ENCODE measurements at regions of chr18 and their contacts with region 1.

Region 1: DNA sequence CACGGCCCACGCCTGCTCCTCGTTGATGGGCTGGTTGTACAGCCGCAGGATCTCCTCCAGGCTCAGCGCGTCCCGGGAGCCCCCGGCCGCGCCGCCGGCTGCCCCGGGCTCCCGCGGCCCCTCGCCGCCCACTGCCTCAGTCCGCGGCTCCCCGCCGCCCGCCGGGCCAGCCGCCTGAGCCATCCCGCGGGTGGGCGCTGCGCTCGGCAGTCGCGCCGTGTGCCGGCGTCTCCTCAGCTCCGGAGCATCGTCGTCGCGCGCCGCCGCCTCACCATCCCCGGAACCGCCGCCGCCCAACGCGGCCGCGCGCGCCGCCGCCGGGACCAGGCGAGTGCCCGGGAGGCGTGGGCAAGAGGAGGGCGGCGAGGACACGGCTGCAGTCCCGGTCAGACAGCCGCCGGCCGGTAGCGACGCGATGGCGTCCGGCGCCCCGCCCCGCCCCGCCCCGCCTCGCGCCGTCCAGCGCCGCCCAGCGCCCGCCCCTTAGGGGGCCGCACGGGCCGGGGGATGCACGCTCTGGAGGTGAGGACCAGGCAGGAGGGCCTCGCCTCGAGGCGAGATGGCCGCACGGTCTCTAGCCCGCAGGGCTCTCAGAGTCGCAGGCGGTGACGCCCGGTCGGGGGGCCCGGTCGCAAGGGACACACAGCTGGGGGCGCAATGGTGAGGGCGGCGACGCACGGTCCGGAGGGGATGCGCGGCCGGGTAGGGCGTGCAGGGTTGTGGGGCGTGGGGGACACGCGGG is at the start of gene SPIRE1:
- DNase-seq: peak; percentile 82
- CTCF ChIP-seq: no peak

Region 2: GRCh38 chr18:12287684-12288402 is 370.0 kb before region 1 on chr18:
- in situ Hi-C with region 1: no loop called
- DNase-seq: no peak
- CTCF ChIP-seq: no peak

Region 3: GRCh38 chr18:12391618-12392165 is 266.2 kb before region 1 on chr18:
- in situ Hi-C with region 1: loop called (anchors 10 kb)
- DNase-seq: peak; percentile 74
- CTCF ChIP-seq: peak; percentile 84

Region 4: DNA sequence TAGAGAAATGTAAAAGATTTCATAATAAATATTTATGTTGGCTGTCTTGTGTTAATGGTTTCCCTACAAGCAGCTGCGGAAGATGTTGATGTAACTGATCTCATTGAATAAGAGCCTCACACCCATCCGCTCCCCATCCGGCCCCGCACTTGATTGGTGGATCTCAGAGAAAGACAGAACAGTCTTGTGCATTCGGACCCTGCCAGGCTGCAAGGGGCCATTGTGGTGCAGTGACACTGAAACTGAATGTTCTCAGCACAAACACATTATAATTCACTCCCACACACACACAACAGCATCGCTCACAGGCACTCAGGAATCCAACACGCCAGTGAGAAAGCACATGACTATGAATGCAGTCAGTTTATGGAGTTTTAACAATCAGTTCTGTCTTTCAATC is 202.4 kb before region 1 on chr18:
- in situ Hi-C with region 1: no loop called
- DNase-seq: no peak
- CTCF ChIP-seq: no peak

Region 5: DNA sequence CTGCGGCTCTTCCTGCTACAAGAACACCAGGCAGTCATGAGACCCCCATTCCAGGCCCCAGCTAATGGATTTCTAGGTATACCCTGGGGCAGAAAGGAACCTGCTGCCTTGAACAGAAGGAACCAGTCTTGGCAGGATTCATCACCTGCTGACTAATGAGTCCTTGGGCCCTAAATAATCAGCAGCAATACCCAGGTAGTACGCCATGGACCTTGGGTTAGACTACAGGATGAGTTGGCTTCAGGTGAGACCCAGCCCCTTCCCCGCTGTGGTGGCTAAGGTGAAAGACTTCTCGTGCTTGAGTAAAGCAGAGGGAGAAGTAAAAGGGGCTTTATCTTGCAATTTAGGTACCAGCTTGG is 105.0 kb before region 1 on chr18:
- in situ Hi-C with region 1: no loop called
- DNase-seq: no peak
- CTCF ChIP-seq: no peak

Measured in GM13976 (cell line).